GM12878 (cell line): ENCODE measurements at regions of chr1 and their contacts with region 1.

Region 1: GRCh38 chr1:244302889-244303613 is 148.7 kb downstream of the ADSS2 start:
- DNase-seq: no peak
- ATAC-seq: no peak
- H3K4me3 ChIP-seq: no peak overlapping the region
- H3K27ac ChIP-seq: no peak overlapping the region
- H3K4me1 ChIP-seq: peaks cover 3% of the 10 kb centered on the region
- H3K27me3 ChIP-seq: no peaks in the 10 kb centered on the region
- CTCF ChIP-seq: no peak
- EP300 ChIP-seq: no peak
- POLR2A ChIP-seq: no peak
- RAD21 ChIP-seq: no peak

Region 2: DNA sequence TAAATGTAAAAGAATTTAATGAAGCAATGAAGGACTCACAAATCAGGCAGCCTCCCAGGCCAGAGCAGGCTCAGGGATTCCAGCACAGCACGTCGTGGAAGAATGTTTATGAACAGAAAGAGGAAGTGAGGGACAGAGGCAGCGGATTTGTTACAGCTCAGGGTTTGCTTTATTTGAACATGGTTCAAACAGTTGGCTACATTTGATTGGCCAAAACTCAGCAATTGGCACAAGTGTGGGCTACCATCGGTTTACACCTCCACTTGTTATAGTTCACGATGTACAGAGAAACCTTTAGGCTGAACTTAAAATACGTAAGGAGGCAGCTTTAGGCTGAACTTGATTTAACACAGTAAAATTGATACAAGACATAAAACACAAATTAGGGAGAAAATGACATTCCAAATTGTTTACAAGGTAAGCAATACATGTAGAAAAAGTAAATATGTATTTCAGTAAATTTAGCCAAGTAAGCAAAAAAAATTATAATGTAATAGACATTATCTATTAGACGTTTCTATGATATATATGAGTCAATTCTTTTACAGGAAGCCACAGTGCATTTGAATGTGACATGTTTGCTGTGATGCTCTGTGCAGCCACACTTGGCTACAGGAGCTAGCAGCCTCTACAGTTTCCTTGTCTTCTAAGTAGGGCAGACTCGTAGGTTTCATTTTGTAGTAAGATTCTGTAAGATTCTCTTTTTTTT is 22.2 kb after region 1 on chr1:
- CTCF ChIA-PET with region 1: interaction called, 10 read pairs
- POLR2A ChIA-PET with region 1: no interaction called
- RAD21 ChIA-PET with region 1: interaction called, 7 read pairs
- SMC1A ChIA-PET with region 1: interaction called, 4 read pairs
- in situ Hi-C with region 1: no loop called
- intact Hi-C with region 1: no loop called
- DNase-seq: peak; percentile 71
- ATAC-seq: peak; percentile 90
- H3K4me3 ChIP-seq: peak overlapping the region; percentile 41; the same call in 1 of the 2 replicates
- H3K27ac ChIP-seq: peak overlapping the region; percentile 77
- H3K4me1 ChIP-seq: peaks cover 5% of the 10 kb centered on the region
- H3K27me3 ChIP-seq: no peaks in the 10 kb centered on the region
- CTCF ChIP-seq: no peak
- EP300 ChIP-seq: no peak
- POLR2A ChIP-seq: 0 out of 2 replicates have a peak, but pooled peaks have one; percentile 35
- RAD21 ChIP-seq: no peak